ENCODE measurements at regions of chr12 and their contacts with region 1.

Region 1: DNA sequence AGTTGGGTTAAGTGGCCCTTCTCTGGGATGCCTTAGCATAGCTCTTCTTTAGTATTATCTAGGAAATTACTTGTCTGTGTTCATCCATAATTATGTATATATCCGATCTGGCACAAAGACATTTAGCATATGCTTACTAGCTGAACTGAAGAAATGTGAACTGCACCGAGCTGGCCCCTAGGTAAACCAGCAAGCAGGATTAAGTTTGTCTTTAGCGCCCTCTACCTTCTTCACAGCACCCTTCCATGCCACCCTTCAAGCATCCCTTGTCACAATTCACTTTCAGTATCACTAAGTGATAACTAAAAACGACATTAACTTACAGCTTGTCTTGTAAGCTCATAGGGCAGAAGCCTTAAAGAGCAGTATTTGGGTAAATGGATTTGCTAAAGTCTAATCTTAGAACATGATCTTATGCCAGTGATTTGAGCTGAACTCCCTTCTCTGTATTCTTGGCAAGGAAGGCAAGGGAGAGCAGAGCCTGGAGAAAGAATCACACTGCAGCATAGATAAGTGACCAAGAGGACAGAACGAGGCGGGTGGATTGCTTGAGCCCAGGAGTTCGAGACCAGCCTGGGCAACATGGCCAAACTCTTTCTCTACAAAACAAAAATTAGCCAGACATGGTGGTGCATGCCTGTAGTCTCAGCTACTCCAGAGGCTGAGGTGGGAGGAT is 2.6 kb upstream of the HAL start:
- DNase-seq: peak in 1 of 2 donors; percentile 28
- ATAC-seq: peak; percentile 65 to 92 (median 81)
- H3K4me3 ChIP-seq: no peak overlapping the region
- H3K27ac ChIP-seq: no peak overlapping the region
- H3K4me1 ChIP-seq: peaks cover 0 to 13% (median 0%) of the 10 kb centered on the region in 9 donors
- H3K27me3 ChIP-seq: peaks cover 0 to 8% (median 0%) of the 10 kb centered on the region in 7 donors
- CTCF ChIP-seq: peak; percentile 27 to 83 (median 70)

Region 2: GRCh38 chr12:95582230-95583058 is 416.3 kb before region 1 on chr12:
- intact Hi-C with region 1: loop called in 5 of 10 experiments (anchors 2 to 10 kb)
- DNase-seq: no peak
- ATAC-seq: peak in 7 of 8 donors; percentile 61 to 91 (median 73)
- H3K4me3 ChIP-seq: no peak overlapping the region
- H3K27ac ChIP-seq: no peak overlapping the region
- H3K4me1 ChIP-seq: peaks cover 0 to 5% (median 0%) of the 10 kb centered on the region in 9 donors
- H3K27me3 ChIP-seq: no peaks in the 10 kb centered on the region
- CTCF ChIP-seq: peak; percentile 36 to 79 (median 69)

Region 3: GRCh38 chr12:95820102-95820703 is 178.5 kb before region 1 on chr12:
- intact Hi-C with region 1: loop called in 7 of 10 experiments (anchors 2 to 10 kb)
- DNase-seq: peak in 1 of 2 donors; percentile 36
- ATAC-seq: peak in 2 of 8 donors; percentile 29 to 56
- H3K4me3 ChIP-seq: no peak overlapping the region
- H3K27ac ChIP-seq: no peak overlapping the region
- H3K4me1 ChIP-seq: peaks cover 0 to 5% (median 0%) of the 10 kb centered on the region in 9 donors
- H3K27me3 ChIP-seq: no peaks in the 10 kb centered on the region
- CTCF ChIP-seq: peak; percentile 20 to 68 (median 57)

Region 4: GRCh38 chr12:95829395-95829794 is 169.4 kb before region 1 on chr12:
- intact Hi-C with region 1: loop called in 4 of 10 experiments (anchors 5 to 10 kb)
- DNase-seq: no peak
- ATAC-seq: no peak
- H3K4me3 ChIP-seq: no peak overlapping the region
- H3K27ac ChIP-seq: no peak overlapping the region
- H3K4me1 ChIP-seq: no peaks in the 10 kb centered on the region
- H3K27me3 ChIP-seq: peaks cover 0 to 10% (median 0%) of the 10 kb centered on the region in 7 donors
- CTCF ChIP-seq: no peak

Region 5: DNA sequence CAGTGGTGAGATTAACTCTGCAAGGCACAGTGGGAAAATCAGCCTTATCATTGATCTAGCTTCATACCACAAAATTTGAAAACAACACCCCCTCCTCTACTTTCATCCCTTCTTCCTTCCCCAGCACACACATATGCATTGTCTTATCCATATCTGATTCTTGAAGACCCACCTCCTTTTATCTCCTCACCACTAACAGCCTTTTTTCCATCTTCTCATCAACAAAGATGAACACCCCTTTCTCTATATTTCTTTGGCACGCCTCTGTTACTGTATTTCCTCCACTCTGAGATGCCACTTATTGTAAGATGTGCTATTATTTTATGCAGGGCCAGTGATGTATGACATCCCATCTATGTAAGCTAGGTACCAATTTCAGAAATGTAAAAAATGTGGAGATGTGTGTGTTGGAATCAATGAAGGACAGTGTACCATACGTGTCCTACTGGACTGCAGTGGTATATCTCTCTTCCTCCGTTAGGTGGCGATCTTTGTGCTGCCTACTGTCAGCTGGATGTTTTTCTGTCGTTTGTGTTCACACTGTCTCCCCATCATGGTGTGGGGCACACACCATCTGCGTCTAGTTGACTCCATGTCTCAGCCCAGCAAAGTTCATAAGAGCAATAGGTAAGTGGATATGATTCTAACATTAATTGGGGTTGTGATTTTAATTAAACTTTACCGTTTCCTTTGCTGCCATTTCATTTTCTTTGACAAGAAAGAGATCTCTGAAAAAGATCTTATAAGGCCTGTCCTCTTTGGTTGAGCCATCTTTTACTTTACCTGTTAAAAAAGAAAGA is 80.4 kb before region 1 on chr12:
- intact Hi-C with region 1: loop called in 9 of 10 experiments (anchors 1 to 5 kb)
- DNase-seq: peak in 1 of 2 donors; percentile 35
- ATAC-seq: peak in 6 of 8 donors; percentile 51 to 81 (median 70)
- H3K4me3 ChIP-seq: no peak overlapping the region
- H3K27ac ChIP-seq: no peak overlapping the region
- H3K4me1 ChIP-seq: no peaks in the 10 kb centered on the region
- H3K27me3 ChIP-seq: peaks cover 0 to 9% (median 0%) of the 10 kb centered on the region in 7 donors
- CTCF ChIP-seq: peak in 8 of 9 donors; percentile 55 to 88 (median 78)

Measured in heart right ventricle (tissue), 16 donors.